ENCODE measurements at regions of chr12 and their contacts with region 1.

Region 1: GRCh38 chr12:76790564-76791552 is 26.9 kb downstream of the ZDHHC17 start:
- DNase-seq: no peak
- H3K4me3 ChIP-seq: no peak overlapping the region
- H3K27ac ChIP-seq: no peak overlapping the region
- H3K4me1 ChIP-seq: peaks cover 0 to 37% of the 10 kb centered on the region in 2 donors
- H3K27me3 ChIP-seq: no peaks in the 10 kb centered on the region
- CTCF ChIP-seq: peak; percentile 57 to 90 (median 74)
- POLR2A ChIP-seq: no peak

Region 2: GRCh38 chr12:76674669-76675315 is 116.1 kb before region 1 on chr12:
- intact Hi-C with region 1: no loop called
- DNase-seq: no peak
- H3K4me3 ChIP-seq: no peak overlapping the region
- H3K27ac ChIP-seq: no peak overlapping the region
- H3K4me1 ChIP-seq: no peaks in the 10 kb centered on the region
- H3K27me3 ChIP-seq: no peaks in the 10 kb centered on the region
- CTCF ChIP-seq: no peak
- POLR2A ChIP-seq: no peak

Region 3: DNA sequence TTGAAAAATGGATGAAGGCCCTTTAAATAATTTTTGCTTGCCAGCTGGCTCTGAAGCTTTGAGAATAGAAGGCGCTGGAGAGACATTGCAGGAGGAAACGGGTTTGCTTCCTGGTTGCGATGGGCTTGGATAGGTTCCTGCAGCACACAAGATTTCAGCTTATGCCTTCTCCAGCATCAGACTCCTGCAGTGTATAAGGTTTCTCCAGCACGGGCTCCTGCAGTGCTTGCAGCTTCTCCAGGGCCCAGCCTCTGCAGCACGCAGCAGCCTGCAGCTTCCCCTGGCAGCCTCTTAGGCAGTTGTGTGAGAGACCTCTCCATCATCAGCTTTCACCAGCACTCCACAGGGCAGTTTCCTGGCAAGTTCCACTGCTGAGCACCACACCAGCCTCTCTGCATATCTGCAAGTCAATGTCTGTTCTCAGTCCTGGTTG is 105.6 kb before region 1 on chr12:
- intact Hi-C with region 1: loop called in 1 of 2 experiments (anchors 10 kb)
- DNase-seq: peak in 1 of 7 donors; percentile 58
- H3K4me3 ChIP-seq: no peak overlapping the region
- H3K27ac ChIP-seq: no peak overlapping the region
- H3K4me1 ChIP-seq: no peaks in the 10 kb centered on the region
- H3K27me3 ChIP-seq: no peaks in the 10 kb centered on the region
- CTCF ChIP-seq: no peak
- POLR2A ChIP-seq: no peak